ENCODE measurements at regions of chr1 and their contacts with region 1.

Region 1: DNA sequence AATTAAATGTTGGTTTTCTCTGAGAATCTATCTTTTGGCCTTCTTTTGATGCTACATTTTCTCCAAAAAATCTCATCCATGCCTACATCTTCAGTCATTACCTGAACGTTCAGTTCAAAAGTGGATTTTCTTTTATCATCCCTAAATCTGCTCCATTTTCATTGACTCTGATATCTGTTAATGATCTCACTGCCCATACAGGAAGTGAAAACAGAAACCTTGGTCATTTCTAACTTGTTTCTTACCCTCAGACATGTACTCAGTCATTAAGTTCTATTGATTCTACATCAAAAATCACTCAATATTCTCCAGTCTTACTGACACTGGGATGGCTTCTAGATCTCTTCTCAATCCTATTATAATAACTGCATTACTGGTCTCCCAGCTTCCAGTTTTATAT is 22.7 kb downstream of the PRKACB start:
- DNase-seq: no peak
- H3K4me3 Mint-ChIP-seq: no peak overlapping the region
- H3K27ac Mint-ChIP-seq: no peak overlapping the region
- H3K4me1 Mint-ChIP-seq: peaks cover 74% of the 10 kb centered on the region
- H3K27me3 Mint-ChIP-seq: no peaks in the 10 kb centered on the region

Region 2: GRCh38 chr1:84181350-84182005 is 14.7 kb after region 1 on chr1:
- CTCF ChIA-PET with region 1: interaction called, 3 read pairs
- POLR2A ChIA-PET with region 1: no interaction called
- intact Hi-C with region 1: loop called (anchors 1 kb)
- DNase-seq: no peak
- H3K4me3 Mint-ChIP-seq: no peak overlapping the region
- H3K27ac Mint-ChIP-seq: no peak overlapping the region
- H3K4me1 Mint-ChIP-seq: peaks cover 12% of the 10 kb centered on the region
- H3K27me3 Mint-ChIP-seq: no peaks in the 10 kb centered on the region

Region 3: DNA sequence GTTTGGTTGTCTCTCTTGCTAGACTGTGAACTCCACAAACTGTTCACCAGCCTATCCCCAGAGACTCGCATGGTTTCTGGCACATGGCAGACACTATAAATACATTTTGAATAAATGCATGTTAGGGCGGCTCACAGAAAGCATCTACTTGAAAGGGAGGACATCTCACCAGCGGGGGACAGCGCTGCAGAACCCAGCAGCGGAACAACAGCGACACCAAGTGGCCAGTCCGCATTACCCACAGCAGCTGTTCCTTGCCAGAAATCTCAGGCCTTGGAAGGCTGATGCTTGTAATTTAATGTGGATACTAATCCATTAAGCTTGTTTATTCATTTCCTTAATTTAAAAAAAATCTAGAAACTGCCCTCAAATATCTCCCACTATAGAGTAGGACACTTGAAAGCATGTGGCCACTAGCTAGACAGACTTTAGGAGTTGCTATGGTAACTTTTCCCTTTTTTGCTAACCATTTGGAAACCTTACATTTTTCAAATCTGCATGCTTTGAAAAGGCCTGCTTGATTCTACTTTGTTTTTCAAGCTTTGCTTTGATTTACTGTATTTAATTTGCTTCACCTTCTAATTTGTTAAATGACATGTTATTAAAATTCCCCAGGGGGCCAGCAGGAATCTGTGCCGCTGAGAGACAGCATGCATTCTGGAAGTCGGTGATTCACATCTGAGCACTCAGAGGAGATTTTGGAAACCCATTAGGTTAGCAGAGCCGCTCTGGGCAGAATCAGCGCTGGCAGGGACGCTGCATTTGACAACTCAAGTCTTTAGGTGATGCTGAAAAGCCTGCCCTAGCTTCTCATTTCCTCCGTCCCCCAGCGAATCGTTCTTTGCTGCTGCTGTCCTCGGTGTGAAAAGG is 587.0 kb after region 1 on chr1:
- CTCF ChIA-PET with region 1: no interaction called
- POLR2A ChIA-PET with region 1: no interaction called
- intact Hi-C with region 1: no loop called
- DNase-seq: peak; percentile 86
- H3K4me3 Mint-ChIP-seq: no peak overlapping the region
- H3K27ac Mint-ChIP-seq: no peak overlapping the region
- H3K4me1 Mint-ChIP-seq: peaks cover 14% of the 10 kb centered on the region
- H3K27me3 Mint-ChIP-seq: peaks cover 27% of the 10 kb centered on the region